Posterior vena cava (tissue), 2 donors: ENCODE measurements at regions of chr19 and their contacts with region 1.

Region 1: GRCh38 chr19:9796113-9796773 is 22.6 kb downstream of the FBXL12 start:
- DNase-seq: peak; percentile 88

Region 2: DNA sequence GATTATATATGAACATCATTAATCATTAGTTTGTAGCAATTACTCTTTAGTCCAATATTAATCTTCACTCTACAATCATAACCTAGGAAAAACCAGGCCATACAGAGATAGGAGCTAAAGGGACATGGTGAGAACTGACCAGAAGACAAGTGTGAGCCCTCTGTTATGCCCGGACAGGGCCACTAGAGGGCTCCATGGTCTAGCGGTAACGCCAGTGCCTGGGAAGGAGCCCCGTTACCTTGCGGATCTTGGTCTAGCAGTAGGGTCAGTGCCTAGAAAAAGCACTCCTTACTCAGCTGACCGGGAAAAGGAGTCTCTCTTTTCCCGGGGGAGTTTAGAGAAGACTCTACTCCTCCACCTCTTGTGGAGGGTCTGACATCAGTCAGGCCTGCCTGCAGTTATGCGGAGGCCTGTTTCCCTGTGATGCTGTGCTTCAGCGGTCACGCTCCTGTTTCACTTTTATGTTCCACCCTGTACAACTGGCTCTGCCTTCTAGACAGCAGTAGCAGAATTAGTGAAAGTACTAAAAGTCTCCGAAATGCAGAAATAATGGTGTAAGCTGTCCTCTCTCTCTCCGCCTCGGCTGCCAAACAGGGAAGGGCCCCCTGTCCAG is 590.6 kb before region 1 on chr19:
- intact Hi-C with region 1: loop called in 1 of 2 experiments (anchors 10 kb)
- DNase-seq: peak; percentile 86

Region 3: DNA sequence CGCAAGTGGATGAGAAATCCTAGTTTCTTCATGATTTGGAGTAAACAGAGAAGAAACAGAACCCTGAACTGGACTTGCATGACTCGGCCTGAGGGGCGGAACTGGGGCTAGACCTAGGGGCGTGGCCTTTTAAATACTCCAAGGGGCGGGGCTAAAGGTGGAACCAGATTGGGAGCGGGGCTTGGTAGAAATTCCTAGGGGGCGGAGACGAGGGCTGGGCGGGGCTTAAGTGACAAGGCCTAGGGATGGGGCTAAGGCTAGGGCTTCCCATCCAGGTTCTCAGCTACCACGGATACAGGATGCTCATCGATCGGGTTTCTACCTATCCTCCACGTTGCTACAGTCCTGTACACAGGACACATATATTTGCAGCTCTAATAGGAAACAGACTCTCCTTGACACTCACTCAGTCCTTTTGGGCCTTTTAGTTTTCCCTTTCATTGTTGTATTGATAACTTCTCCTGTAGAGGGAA is 486.2 kb before region 1 on chr19:
- intact Hi-C with region 1: loop called in 1 of 2 experiments (anchors 10 kb)
- DNase-seq: peak; percentile 97

Region 4: GRCh38 chr19:9621156-9622037 is 174.8 kb before region 1 on chr19 and contains the start of gene ZNF561:
- intact Hi-C with region 1: loop called in 1 of 2 experiments (anchors 5 kb)
- DNase-seq: peak; percentile 97
- total RNA-seq, gene ZNF561: 21.5 to 27.4 TPM